Activated CD8-positive, alpha-beta T cell treated with anti-CD3 and anti-CD28 coated beads for 36 hours (primary cell): ENCODE measurements at regions of chr2 and their contacts with region 1.

Region 1: DNA sequence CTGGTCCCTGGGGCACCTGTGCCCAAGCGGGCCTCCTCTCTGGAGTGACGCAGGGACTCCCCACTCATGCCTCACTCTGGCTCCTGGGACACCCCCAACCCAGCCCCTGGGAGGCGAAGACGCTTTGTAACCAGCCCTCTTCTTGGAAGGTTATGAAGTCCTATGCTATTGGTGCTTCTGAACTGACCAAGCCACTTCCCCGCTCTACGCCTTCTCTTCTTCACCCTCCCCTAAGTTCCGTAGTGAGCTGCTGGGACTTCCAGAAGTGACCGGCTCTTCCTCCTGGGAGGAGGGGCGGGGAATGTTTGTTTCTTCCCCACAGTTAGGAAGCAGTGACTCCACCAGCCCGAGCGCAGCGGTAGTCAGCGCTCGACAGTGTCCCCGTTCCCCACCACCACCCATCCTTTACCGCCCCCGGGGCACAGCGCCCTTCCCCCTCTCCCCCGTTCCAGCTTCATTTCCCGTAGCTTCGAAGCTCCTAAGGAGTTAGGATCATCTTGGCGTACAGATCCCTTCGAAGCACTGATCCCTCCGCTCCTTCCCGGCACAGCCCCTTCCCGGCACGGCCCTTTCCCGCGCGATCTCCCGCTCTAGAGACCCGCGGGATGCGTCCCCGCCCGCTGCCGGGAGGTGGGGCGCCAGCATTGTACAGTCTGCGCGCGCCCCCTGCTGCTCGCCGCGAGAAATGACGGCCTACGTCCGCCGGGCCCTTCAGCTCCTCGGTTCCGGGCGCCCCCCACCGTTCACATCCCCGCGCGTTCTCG is 25.3 kb upstream of the NOTO start:
- DNase-seq: peak; percentile 95
- ATAC-seq: peak; percentile 82
- H3K4me3 Mint-ChIP-seq: peak overlapping the region; percentile 79
- H3K27ac Mint-ChIP-seq: peak overlapping the region; percentile 71
- H3K4me1 Mint-ChIP-seq: peaks cover 26% of the 10 kb centered on the region
- H3K27me3 Mint-ChIP-seq: peaks cover 28% of the 10 kb centered on the region
- CTCF ChIP-seq: peak; percentile 99

Region 2: DNA sequence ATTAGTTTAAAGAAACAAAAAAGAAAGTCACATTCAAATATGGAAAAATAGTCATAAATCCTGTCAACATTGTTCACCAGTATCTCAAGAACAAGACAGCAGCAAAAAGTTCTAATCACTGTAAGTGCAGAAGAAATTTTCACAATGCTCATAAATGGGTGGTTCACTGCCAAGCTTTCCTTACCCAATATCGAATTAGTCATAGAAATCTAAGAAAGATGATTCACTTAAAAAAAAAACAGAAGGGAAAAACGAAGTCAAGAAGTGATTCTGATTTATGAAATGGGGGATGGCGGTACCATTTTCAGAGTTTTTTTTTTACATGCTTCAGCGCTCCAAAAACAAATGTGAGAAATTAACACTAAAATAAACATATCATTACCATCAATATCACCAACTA is 507.9 kb before region 1 on chr2:
- CTCF ChIA-PET with region 1: no interaction called
- POLR2A ChIA-PET with region 1: no interaction called
- intact Hi-C with region 1: no loop called
- DNase-seq: no peak
- ATAC-seq: no peak
- H3K4me3 Mint-ChIP-seq: no peak overlapping the region
- H3K27ac Mint-ChIP-seq: no peak overlapping the region
- H3K4me1 Mint-ChIP-seq: no peaks in the 10 kb centered on the region
- H3K27me3 Mint-ChIP-seq: no peaks in the 10 kb centered on the region
- CTCF ChIP-seq: no peak

Region 3: GRCh38 chr2:72825241-72826155 is 351.6 kb before region 1 on chr2 and contains the start of gene EXOC6B:
- CTCF ChIA-PET with region 1: no interaction called
- POLR2A ChIA-PET with region 1: no interaction called
- intact Hi-C with region 1: no loop called
- DNase-seq: peak; percentile 90
- ATAC-seq: peak; percentile 88
- H3K4me3 Mint-ChIP-seq: peak within 1 kb of the TSS; percentile 91
- H3K27ac Mint-ChIP-seq: peak within 1 kb of the TSS; percentile 75
- H3K4me1 Mint-ChIP-seq: peaks cover 34% of the 10 kb centered on the region
- H3K27me3 Mint-ChIP-seq: peaks cover 1% of the 10 kb centered on the region
- CTCF ChIP-seq: no peak
- total RNA-seq, gene EXOC6B: 6.2 to 8.3 TPM

Region 4: DNA sequence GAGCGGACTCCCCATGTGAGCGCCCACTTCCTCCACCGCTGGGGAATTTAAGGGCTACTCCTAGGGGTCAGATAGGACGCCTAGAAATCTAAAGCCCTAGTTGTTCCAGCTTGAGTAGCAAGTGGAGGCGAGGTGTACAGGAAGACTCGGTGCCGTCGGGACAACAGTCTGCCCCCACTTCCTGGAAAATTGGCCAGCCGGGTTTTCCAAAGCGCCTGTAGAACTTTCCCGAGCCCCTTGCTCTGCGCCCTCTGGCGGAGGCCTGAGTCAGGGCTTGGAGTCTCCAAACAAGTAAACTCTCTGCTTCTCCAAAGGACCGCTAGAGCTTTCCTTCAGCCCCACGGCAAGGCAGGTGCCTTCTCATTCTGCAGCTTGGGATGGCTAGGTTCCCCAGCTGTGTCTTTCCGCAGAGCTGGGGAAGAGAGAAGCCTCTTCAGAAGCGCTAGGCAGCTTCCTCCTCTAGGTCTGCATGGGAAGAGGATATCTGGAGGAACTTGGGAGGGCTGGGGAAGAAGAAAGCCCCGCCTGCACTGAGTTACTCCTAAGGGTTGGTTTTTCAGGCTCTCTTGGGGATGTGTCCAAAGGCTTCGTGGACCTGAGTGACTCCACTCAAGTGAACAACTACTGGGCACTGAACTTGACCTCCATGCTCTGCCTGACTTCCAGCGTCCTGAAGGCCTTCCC is 289.2 kb before region 1 on chr2:
- CTCF ChIA-PET with region 1: interaction called, 48 read pairs
- POLR2A ChIA-PET with region 1: interaction called, 3 read pairs
- intact Hi-C with region 1: no loop called
- DNase-seq: peak; percentile 68
- ATAC-seq: peak; percentile 47
- H3K4me3 Mint-ChIP-seq: peak overlapping the region; percentile 72
- H3K27ac Mint-ChIP-seq: no peak overlapping the region
- H3K4me1 Mint-ChIP-seq: peaks cover 6% of the 10 kb centered on the region
- H3K27me3 Mint-ChIP-seq: peaks cover 50% of the 10 kb centered on the region
- CTCF ChIP-seq: peak; percentile 89

Region 5: GRCh38 chr2:73080711-73081131 is 96.3 kb before region 1 on chr2:
- CTCF ChIA-PET with region 1: interaction called, 67 read pairs
- POLR2A ChIA-PET with region 1: interaction called, 3 read pairs
- intact Hi-C with region 1: no loop called
- DNase-seq: no peak
- ATAC-seq: no peak
- H3K4me3 Mint-ChIP-seq: no peak overlapping the region
- H3K27ac Mint-ChIP-seq: no peak overlapping the region
- H3K4me1 Mint-ChIP-seq: no peaks in the 10 kb centered on the region
- H3K27me3 Mint-ChIP-seq: no peaks in the 10 kb centered on the region
- CTCF ChIP-seq: no peak

Region 6: DNA sequence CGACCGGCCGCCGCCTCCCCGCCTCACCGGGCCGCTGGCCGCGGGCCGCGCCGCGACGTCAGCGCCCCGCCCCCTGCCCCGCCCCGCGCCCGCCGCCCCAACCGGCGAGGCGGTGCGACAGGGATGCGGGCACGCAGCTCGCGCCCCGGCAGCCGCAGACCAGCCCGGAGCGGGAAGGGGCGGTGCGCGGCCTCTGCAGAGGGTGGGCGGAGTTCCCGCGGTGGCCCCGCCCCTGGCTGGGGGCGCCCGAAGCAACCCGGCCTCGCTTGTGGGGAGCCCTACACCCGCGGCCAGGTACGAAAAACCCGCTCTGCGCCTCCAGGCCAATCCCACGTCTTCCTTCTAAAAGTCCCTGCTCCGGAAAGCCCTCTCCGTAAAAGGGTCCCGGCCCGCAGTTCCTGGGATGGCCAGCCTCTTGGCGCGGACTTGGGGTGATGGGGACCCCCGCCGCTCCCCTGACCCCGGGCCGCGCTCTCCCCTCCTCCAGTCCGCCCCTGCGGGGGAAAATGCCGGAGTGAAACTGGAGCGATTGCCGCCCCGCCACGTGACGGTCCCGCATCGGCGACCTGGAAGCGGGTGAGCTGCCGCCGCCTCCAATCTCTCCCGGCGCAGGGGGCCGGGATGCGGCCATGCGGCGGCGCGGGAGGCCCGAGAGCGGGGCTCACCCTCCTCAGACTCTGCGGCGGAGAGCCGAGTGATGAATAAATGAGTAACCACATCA is 64.0 kb before region 1 on chr2 and contains the start of gene RAB11FIP5:
- CTCF ChIA-PET with region 1: interaction called, 20 read pairs
- POLR2A ChIA-PET with region 1: no interaction called
- intact Hi-C with region 1: no loop called
- DNase-seq: peak; percentile 75
- ATAC-seq: peak; percentile 83
- H3K4me3 Mint-ChIP-seq: peak within 1 kb of the TSS; percentile 81
- H3K27ac Mint-ChIP-seq: peak within 1 kb of the TSS; percentile 68
- H3K4me1 Mint-ChIP-seq: peaks cover 18% of the 10 kb centered on the region
- H3K27me3 Mint-ChIP-seq: peaks cover 7% of the 10 kb centered on the region
- CTCF ChIP-seq: no peak
- total RNA-seq, gene RAB11FIP5: 9.0 to 9.7 TPM

Region 7: GRCh38 chr2:73187549-73187948 is 10.5 kb after region 1 on chr2:
- CTCF ChIA-PET with region 1: interaction called, 32 read pairs
- POLR2A ChIA-PET with region 1: no interaction called
- intact Hi-C with region 1: no loop called
- DNase-seq: no peak
- ATAC-seq: no peak
- H3K4me3 Mint-ChIP-seq: no peak overlapping the region
- H3K27ac Mint-ChIP-seq: no peak overlapping the region
- H3K4me1 Mint-ChIP-seq: no peaks in the 10 kb centered on the region
- H3K27me3 Mint-ChIP-seq: peaks cover 7% of the 10 kb centered on the region
- CTCF ChIP-seq: no peak

Region 8: GRCh38 chr2:73233154-73233931 is 56.3 kb after region 1 on chr2 and contains the start of gene PRADC1:
- CTCF ChIA-PET with region 1: interaction called, 20 read pairs
- POLR2A ChIA-PET with region 1: interaction called, 6 read pairs
- intact Hi-C with region 1: no loop called
- DNase-seq: peak; percentile 98
- ATAC-seq: peak; percentile 90
- H3K4me3 Mint-ChIP-seq: peak within 1 kb of the TSS; percentile 99
- H3K27ac Mint-ChIP-seq: peak within 1 kb of the TSS; percentile 95
- H3K4me1 Mint-ChIP-seq: peaks cover 29% of the 10 kb centered on the region
- H3K27me3 Mint-ChIP-seq: no peaks in the 10 kb centered on the region
- CTCF ChIP-seq: no peak
- total RNA-seq, gene PRADC1: 12.4 to 16.2 TPM